A673 (cell line): ENCODE measurements at regions of chr17 and their contacts with region 1.

Region 1: GRCh38 chr17:72985881-72986720 is 106.4 kb downstream of the SLC39A11 start:
- DNase-seq: peak; percentile 85
- H3K4me3 ChIP-seq: no peak overlapping the region
- H3K27ac ChIP-seq: no peak overlapping the region
- H3K4me1 ChIP-seq: no peaks in the 10 kb centered on the region
- H3K27me3 ChIP-seq: no peaks in the 10 kb centered on the region
- CTCF ChIP-seq: peak; percentile 93

Region 2: GRCh38 chr17:72788950-72789585 is 197.0 kb before region 1 on chr17:
- CTCF ChIA-PET with region 1: no interaction called
- POLR2A ChIA-PET with region 1: no interaction called
- intact Hi-C with region 1: no loop called
- DNase-seq: peak; percentile 18
- H3K4me3 ChIP-seq: no peak overlapping the region
- H3K27ac ChIP-seq: no peak overlapping the region
- H3K4me1 ChIP-seq: no peaks in the 10 kb centered on the region
- H3K27me3 ChIP-seq: no peaks in the 10 kb centered on the region
- CTCF ChIP-seq: no peak

Region 3: DNA sequence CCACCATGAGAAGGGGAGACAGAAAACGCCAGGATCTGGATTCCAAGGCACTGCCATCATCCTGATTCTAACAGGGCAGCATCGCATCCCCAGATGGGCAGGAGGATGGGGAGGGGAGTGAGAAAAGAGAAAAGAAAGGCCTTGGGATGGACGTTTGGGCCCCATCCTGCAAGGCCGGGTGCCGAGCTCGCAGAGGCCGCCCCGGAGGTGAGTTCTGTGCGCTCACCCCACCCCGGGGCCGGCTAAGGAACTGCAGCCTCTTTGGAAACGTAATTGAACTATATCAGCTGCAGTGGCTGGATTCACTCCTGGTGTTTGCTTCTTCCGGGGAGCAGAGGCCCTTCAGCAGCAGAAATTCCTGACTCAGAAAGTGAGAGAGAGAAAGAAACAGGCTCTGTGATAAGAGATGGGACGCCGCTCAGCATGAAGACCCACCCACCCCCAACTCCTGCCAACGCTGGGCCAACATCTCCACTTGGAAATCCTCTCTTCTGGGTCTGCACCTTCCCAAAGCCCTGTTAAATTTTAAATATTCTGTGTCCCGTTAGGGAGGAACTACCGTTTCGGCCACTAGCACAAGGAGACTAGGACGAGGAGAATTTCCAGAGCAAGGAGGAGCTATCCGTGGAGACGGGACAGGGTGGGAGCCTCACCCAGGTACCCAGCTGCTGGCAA is 170.2 kb after region 1 on chr17:
- CTCF ChIA-PET with region 1: interaction called, 21 read pairs
- POLR2A ChIA-PET with region 1: no interaction called
- intact Hi-C with region 1: loop called (anchors 1 kb)
- DNase-seq: peak; percentile 79
- H3K4me3 ChIP-seq: no peak overlapping the region
- H3K27ac ChIP-seq: no peak overlapping the region
- H3K4me1 ChIP-seq: peaks cover 14% of the 10 kb centered on the region
- H3K27me3 ChIP-seq: peaks cover 3% of the 10 kb centered on the region
- CTCF ChIP-seq: peak; percentile 84